Heart left ventricle (tissue), 16 donors: ENCODE measurements at regions of chr7 and their contacts with region 1.

Region 1: GRCh38 chr7:38318803-38319416 is 45.5 kb upstream of the TARP start:
- DNase-seq: peak in 1 of 5 donors; percentile 34
- ATAC-seq: peak; percentile 41 to 92 (median 81)
- H3K4me3 ChIP-seq: no peak overlapping the region
- H3K27ac ChIP-seq: peak overlapping the region in 2 of 12 donors; percentile 9 to 37
- H3K4me1 ChIP-seq: peaks cover 0 to 21% (median 0%) of the 10 kb centered on the region in 12 donors
- H3K27me3 ChIP-seq: no peaks in the 10 kb centered on the region
- CTCF ChIP-seq: peak; percentile 23 to 59 (median 51)
- POLR2A ChIP-seq: no peak

Region 2: GRCh38 chr7:38222481-38223096 is 96.3 kb before region 1 on chr7:
- intact Hi-C with region 1: loop called in 7 of 10 experiments (anchors 5 to 10 kb)
- DNase-seq: no peak
- ATAC-seq: peak; percentile 68 to 81 (median 70)
- H3K4me3 ChIP-seq: no peak overlapping the region
- H3K27ac ChIP-seq: peak overlapping the region in 1 of 12 donors; percentile 11
- H3K4me1 ChIP-seq: peaks cover 0 to 10% (median 0%) of the 10 kb centered on the region in 12 donors
- H3K27me3 ChIP-seq: no peaks in the 10 kb centered on the region
- CTCF ChIP-seq: peak; percentile 83 to 95 (median 89)
- POLR2A ChIP-seq: no peak

Region 3: GRCh38 chr7:38274486-38274885 is 44.4 kb before region 1 on chr7:
- intact Hi-C with region 1: no loop called
- DNase-seq: no peak
- ATAC-seq: no peak
- H3K4me3 ChIP-seq: peak overlapping the region in 1 of 12 donors; percentile 19
- H3K27ac ChIP-seq: peak overlapping the region in 1 of 12 donors; percentile 30
- H3K4me1 ChIP-seq: no peaks in the 10 kb centered on the region
- H3K27me3 ChIP-seq: no peaks in the 10 kb centered on the region
- CTCF ChIP-seq: no peak
- POLR2A ChIP-seq: no peak

Region 4: GRCh38 chr7:38825721-38826440 is 507.0 kb after region 1 on chr7:
- intact Hi-C with region 1: no loop called
- DNase-seq: no peak
- ATAC-seq: peak; percentile 42 to 76 (median 50)
- H3K4me3 ChIP-seq: no peak overlapping the region
- H3K27ac ChIP-seq: peak overlapping the region in 10 of 12 donors; percentile 16 to 66 (median 40)
- H3K4me1 ChIP-seq: peaks cover 0 to 19% (median 12%) of the 10 kb centered on the region in 12 donors
- H3K27me3 ChIP-seq: no peaks in the 10 kb centered on the region
- CTCF ChIP-seq: no peak
- POLR2A ChIP-seq: no peak